ENCODE measurements at regions of chr2 and their contacts with region 1.

Region 1: GRCh38 chr2:69724540-69725159 is 17.3 kb upstream of the ANXA4 start:
- DNase-seq: peak; percentile 91
- ATAC-seq: peak; percentile 95
- H3K4me3 Mint-ChIP-seq: peak overlapping the region; percentile 53
- H3K27ac Mint-ChIP-seq: no peak overlapping the region
- H3K4me1 Mint-ChIP-seq: peaks cover 13% of the 10 kb centered on the region
- H3K27me3 Mint-ChIP-seq: peaks cover 5% of the 10 kb centered on the region

Region 2: DNA sequence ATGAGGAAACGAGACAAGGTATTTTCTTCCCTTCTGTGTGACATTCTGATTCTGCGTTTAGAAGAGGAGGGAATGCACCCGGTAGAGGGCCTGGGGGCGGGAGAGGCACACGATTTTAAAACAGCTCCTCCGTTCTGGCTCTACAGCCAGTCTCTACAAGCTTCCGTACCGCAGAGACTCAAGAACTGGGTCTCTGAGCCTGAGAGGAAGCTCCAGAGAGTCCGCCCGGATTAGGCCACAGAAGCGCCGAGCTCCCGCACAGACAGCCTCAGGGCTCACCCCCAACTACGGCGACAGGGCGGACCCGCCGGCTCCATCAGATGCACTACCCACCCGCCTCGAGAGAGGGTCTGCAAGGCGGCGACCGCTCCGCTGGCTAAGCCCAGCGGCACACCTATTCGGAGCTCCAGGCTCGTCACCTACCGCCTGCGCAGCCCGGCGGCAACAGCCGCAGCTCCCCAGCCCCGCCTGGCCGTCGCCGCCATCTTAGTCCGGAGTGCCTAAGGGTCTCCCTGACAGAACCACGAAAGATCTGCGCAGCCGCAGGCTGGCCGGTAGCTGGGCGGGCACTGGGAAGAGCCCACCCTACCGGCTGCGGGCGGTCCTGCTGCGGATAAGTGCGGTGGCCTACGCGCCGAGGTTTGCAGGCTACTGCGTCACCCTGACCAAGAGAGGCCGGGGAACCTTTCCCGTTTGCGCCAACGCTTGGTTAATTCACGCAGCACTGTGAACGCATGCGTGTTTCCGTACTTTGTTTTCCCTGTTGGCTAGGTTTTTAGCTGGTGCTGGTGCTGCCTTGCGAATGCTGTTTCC is 287.5 kb before region 1 on chr2 and contains the start of gene NFU1:
- CTCF ChIA-PET with region 1: interaction called, 10 read pairs
- POLR2A ChIA-PET with region 1: no interaction called
- DNase-seq: peak; percentile 91
- ATAC-seq: peak; percentile 92
- H3K4me3 Mint-ChIP-seq: peak within 1 kb of the TSS; percentile 96
- H3K27ac Mint-ChIP-seq: peak within 1 kb of the TSS; percentile 97
- H3K4me1 Mint-ChIP-seq: peaks cover 36% of the 10 kb centered on the region
- H3K27me3 Mint-ChIP-seq: no peaks in the 10 kb centered on the region
- total RNA-seq, gene NFU1: 27.8 to 30.4 TPM

Region 3: DNA sequence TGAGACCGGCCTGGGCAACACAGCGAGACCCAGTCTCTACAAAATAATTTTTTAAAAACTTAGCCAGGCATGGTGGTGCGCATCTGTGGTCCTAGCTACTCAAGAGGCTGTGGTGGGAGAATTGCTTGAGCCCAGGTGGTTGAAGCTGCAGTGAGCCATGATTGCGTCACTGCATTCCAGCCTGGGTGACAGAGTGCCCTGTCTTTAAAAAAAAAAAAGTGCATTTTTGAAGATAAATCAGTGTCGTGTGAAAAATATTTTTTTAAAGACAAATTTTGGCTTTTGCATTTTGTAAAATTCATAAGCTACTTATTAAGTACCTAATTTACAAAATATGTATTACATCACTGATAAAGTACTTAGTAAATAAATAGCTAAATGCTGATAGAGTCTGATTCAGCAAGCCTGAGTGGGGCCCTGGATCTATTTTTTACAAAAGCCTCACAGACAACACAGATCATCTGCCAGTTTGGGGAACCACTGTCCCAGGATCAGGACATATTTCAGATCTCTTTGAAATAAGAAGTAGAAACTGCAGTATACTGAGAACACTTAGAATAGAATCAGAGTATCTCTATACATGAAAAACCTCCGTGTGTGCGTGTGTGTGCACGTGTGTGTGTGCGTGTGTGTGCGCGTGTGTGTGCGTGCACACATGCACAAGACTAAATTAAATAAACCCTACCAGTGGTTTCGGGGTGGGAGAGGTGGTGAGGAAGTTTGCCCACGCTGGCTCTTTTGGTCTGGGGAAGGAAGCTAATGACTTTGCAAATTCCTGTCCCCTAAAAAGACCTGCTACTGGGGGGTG is 142.7 kb before region 1 on chr2:
- CTCF ChIA-PET with region 1: interaction called, 10 read pairs
- POLR2A ChIA-PET with region 1: no interaction called
- DNase-seq: peak; percentile 50
- ATAC-seq: peak; percentile 34
- H3K4me3 Mint-ChIP-seq: peak overlapping the region; percentile 59
- H3K27ac Mint-ChIP-seq: peak overlapping the region; percentile 53
- H3K4me1 Mint-ChIP-seq: peaks cover 86% of the 10 kb centered on the region
- H3K27me3 Mint-ChIP-seq: no peaks in the 10 kb centered on the region

Region 4: GRCh38 chr2:69755862-69756467 is 31.3 kb after region 1 on chr2:
- CTCF ChIA-PET with region 1: interaction called, 10 read pairs
- POLR2A ChIA-PET with region 1: no interaction called
- DNase-seq: no peak
- ATAC-seq: peak; percentile 55
- H3K4me3 Mint-ChIP-seq: no peak overlapping the region
- H3K27ac Mint-ChIP-seq: no peak overlapping the region
- H3K4me1 Mint-ChIP-seq: peaks cover 15% of the 10 kb centered on the region
- H3K27me3 Mint-ChIP-seq: no peaks in the 10 kb centered on the region

Region 5: GRCh38 chr2:69798909-69799526 is 74.4 kb after region 1 on chr2:
- CTCF ChIA-PET with region 1: interaction called, 23 read pairs
- POLR2A ChIA-PET with region 1: no interaction called
- DNase-seq: no peak
- ATAC-seq: peak; percentile 44
- H3K4me3 Mint-ChIP-seq: peak overlapping the region; percentile 8
- H3K27ac Mint-ChIP-seq: no peak overlapping the region
- H3K4me1 Mint-ChIP-seq: peaks cover 27% of the 10 kb centered on the region
- H3K27me3 Mint-ChIP-seq: peaks cover 2% of the 10 kb centered on the region

Region 6: GRCh38 chr2:69837533-69837932 is 112.9 kb after region 1 on chr2:
- CTCF ChIA-PET with region 1: interaction called, 12 read pairs
- POLR2A ChIA-PET with region 1: no interaction called
- DNase-seq: no peak
- ATAC-seq: no peak
- H3K4me3 Mint-ChIP-seq: no peak overlapping the region
- H3K27ac Mint-ChIP-seq: no peak overlapping the region
- H3K4me1 Mint-ChIP-seq: peaks cover 38% of the 10 kb centered on the region
- H3K27me3 Mint-ChIP-seq: no peaks in the 10 kb centered on the region

Region 7: DNA sequence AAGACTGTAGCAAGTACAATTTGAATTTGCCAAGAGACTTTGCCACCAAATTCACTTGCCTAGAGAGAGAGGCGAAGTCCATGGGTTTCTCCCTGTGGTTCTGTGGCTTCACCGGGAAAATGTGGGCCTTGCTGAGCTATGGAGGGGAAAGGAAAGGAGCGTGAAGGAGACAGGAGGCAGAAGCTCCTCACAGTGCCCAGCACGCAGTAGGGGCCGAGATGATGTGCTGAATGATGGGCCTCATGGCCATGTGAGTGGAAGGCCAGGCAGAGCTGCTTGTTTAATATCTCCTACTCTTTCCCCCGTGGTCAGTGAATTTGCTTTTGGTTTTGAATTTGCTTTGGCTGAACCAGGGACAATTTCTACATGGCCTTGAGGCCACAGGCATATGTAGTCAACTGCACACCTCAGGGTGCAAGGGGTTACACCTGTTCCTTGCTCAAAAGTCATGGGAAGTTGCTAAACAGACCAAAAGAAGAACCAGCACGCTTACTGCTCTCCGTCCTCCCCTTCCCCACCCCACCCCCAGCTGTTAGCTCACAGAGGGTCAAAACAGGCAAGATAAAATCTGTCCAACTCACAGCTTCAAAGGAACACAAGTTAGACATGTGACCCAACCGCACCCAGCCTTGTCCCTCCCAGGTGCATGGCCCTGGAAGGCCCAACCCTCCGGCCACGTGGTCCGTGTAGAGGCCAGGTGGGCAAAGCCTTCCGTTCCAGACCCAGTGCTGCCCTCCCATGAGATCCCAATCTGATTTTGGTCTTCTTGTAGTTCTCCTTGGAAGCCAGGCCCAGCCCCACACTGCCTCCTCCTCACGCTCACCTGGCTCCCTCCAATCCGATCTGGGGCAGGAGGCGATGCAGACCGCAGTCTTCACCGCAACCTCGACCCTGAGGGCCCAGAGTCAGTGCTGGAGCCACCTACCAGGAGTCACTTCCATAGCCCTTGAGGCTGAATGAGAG is 251.1 kb after region 1 on chr2:
- CTCF ChIA-PET with region 1: no interaction called
- POLR2A ChIA-PET with region 1: no interaction called
- DNase-seq: no peak
- ATAC-seq: no peak
- H3K4me3 Mint-ChIP-seq: no peak overlapping the region
- H3K27ac Mint-ChIP-seq: no peak overlapping the region
- H3K4me1 Mint-ChIP-seq: peaks cover 14% of the 10 kb centered on the region
- H3K27me3 Mint-ChIP-seq: no peaks in the 10 kb centered on the region

Region 8: GRCh38 chr2:70142590-70143313 is 418.1 kb after region 1 on chr2:
- CTCF ChIA-PET with region 1: interaction called, 13 read pairs
- POLR2A ChIA-PET with region 1: no interaction called
- DNase-seq: peak; percentile 100
- ATAC-seq: peak; percentile 74
- H3K4me3 Mint-ChIP-seq: peak overlapping the region; percentile 84
- H3K27ac Mint-ChIP-seq: peak overlapping the region; percentile 96
- H3K4me1 Mint-ChIP-seq: peaks cover 76% of the 10 kb centered on the region
- H3K27me3 Mint-ChIP-seq: no peaks in the 10 kb centered on the region